Activated CD4-positive, alpha-beta T cell treated with anti-CD3 and anti-CD28 coated beads, Interleukin-2, amount 10 ng/mL, durations not matched to agents 7 days and 5 days (primary cell): ENCODE measurements at regions of chr22 and their contacts with region 1.

Region 1: DNA sequence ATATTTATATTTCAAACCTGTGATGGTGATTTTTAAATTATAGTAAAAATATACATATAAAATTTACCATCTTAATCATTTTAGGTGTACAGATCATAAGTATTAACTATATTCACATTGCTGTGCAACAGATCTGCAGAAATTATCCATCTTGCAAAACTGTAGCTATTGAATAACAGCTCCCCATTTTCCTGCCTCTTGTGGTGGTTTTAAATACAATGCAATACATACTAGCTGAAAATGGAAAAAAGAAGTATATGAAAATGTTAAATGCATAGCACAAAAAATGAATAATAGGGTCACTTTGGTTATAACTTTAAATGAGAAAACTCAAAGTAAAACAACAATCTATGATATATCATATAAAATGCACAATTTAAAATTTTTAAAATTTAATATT is 130.9 kb upstream of the VPREB1 start:
- DNase-seq: no peak
- H3K4me3 Mint-ChIP-seq: no peak overlapping the region
- H3K27ac Mint-ChIP-seq: no peak overlapping the region
- H3K4me1 Mint-ChIP-seq: peaks cover 25% of the 10 kb centered on the region
- H3K27me3 Mint-ChIP-seq: peaks cover 12% of the 10 kb centered on the region

Region 2: GRCh38 chr22:21816787-21817496 is 296.8 kb before region 1 on chr22:
- CTCF ChIA-PET with region 1: no interaction called
- POLR2A ChIA-PET with region 1: interaction called, 10 read pairs
- DNase-seq: peak; percentile 61
- H3K4me3 Mint-ChIP-seq: peak overlapping the region; percentile 28
- H3K27ac Mint-ChIP-seq: peak overlapping the region; percentile 79
- H3K4me1 Mint-ChIP-seq: peaks cover 51% of the 10 kb centered on the region
- H3K27me3 Mint-ChIP-seq: no peaks in the 10 kb centered on the region

Region 3: DNA sequence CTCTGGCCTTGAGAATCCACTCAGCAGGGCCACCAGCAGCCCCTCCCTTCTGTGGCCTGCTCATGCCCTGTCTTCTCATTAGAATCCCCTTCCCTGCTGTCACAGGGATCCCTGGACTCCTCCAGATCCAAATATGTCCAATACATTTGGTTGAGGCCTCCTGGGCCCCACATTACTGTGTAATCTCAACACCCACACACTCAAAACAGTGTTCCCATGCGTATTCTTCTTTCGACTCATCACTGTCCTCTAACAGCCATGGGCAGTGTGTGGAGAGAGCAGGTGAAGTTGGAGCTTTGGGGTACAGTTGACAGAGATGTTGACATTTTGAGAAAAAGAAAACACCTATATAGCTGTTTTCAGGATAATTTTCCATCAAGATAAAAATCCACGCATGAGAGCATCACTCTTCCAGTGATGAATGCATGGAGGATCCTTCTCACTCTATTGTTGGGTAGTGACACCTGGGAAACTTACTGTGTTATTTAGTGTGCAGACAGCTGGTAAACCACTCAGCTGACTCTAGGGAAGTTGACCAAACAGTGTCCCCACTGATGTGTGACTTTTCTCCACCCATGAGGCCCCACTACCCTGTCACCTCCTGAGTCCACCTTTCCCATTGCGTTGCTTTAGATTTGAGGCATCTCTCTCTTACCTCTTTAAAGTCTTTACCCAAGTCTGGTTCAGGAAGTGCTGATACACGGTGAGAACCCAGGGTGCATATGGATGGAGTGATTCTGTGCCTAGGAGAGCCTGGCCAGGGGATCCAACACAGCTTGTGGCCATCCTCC is 102.2 kb after region 1 on chr22:
- CTCF ChIA-PET with region 1: no interaction called
- POLR2A ChIA-PET with region 1: no interaction called
- DNase-seq: no peak
- H3K4me3 Mint-ChIP-seq: no peak overlapping the region
- H3K27ac Mint-ChIP-seq: no peak overlapping the region
- H3K4me1 Mint-ChIP-seq: peaks cover 15% of the 10 kb centered on the region
- H3K27me3 Mint-ChIP-seq: no peaks in the 10 kb centered on the region